ENCODE measurements at regions of chr9 and their contacts with region 1.

Region 1: GRCh38 chr9:19976226-19976625 is 187.4 kb upstream of the SLC24A2 start:
- DNase-seq: peak; percentile 49
- ATAC-seq: peak; percentile 96
- H3K4me3 Mint-ChIP-seq: no peak overlapping the region
- H3K27ac Mint-ChIP-seq: peak overlapping the region; percentile 88
- H3K4me1 Mint-ChIP-seq: peaks cover 25% of the 10 kb centered on the region
- H3K27me3 Mint-ChIP-seq: peaks cover 2% of the 10 kb centered on the region

Region 2: DNA sequence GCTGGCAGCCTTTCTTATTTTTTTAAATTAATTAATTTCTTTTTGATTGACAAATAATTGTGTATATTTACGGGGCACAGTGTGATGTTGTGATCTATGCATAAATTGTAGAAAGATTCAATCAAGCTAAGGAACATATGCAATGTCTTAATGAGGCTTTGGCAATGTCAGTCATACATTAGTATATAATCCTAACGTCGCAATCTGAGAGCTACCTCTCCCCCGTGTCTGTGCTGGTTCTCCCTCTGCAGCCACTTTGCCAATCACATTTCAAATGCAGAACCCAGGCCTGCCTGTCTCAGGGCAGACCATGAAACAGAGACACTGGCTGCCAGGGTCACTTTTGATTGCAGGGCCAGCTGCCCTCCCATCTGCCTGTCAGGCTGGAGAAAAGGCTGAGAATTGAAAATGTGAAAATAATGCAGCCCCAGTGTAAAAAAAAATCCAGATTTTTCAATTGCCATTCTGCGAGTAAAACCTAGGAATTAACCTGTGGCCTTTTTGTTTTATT is 243.7 kb before region 1 on chr9:
- CTCF ChIA-PET with region 1: no interaction called
- POLR2A ChIA-PET with region 1: no interaction called
- intact Hi-C with region 1: no loop called
- DNase-seq: no peak
- ATAC-seq: no peak
- H3K4me3 Mint-ChIP-seq: no peak overlapping the region
- H3K27ac Mint-ChIP-seq: no peak overlapping the region
- H3K4me1 Mint-ChIP-seq: no peaks in the 10 kb centered on the region
- H3K27me3 Mint-ChIP-seq: peaks cover 8% of the 10 kb centered on the region

Region 3: GRCh38 chr9:19828576-19829109 is 147.6 kb before region 1 on chr9:
- CTCF ChIA-PET with region 1: no interaction called
- POLR2A ChIA-PET with region 1: no interaction called
- intact Hi-C with region 1: no loop called
- DNase-seq: no peak
- ATAC-seq: no peak
- H3K4me3 Mint-ChIP-seq: no peak overlapping the region
- H3K27ac Mint-ChIP-seq: no peak overlapping the region
- H3K4me1 Mint-ChIP-seq: no peaks in the 10 kb centered on the region
- H3K27me3 Mint-ChIP-seq: peaks cover 6% of the 10 kb centered on the region

Region 4: GRCh38 chr9:20043035-20043434 is 66.8 kb after region 1 on chr9:
- CTCF ChIA-PET with region 1: no interaction called
- POLR2A ChIA-PET with region 1: no interaction called
- intact Hi-C with region 1: loop called (anchors 1 to 5 kb)
- DNase-seq: peak; percentile 35
- ATAC-seq: peak; percentile 85
- H3K4me3 Mint-ChIP-seq: peak overlapping the region; percentile 34
- H3K27ac Mint-ChIP-seq: peak overlapping the region; percentile 26
- H3K4me1 Mint-ChIP-seq: peaks cover 27% of the 10 kb centered on the region
- H3K27me3 Mint-ChIP-seq: no peaks in the 10 kb centered on the region

Region 5: DNA sequence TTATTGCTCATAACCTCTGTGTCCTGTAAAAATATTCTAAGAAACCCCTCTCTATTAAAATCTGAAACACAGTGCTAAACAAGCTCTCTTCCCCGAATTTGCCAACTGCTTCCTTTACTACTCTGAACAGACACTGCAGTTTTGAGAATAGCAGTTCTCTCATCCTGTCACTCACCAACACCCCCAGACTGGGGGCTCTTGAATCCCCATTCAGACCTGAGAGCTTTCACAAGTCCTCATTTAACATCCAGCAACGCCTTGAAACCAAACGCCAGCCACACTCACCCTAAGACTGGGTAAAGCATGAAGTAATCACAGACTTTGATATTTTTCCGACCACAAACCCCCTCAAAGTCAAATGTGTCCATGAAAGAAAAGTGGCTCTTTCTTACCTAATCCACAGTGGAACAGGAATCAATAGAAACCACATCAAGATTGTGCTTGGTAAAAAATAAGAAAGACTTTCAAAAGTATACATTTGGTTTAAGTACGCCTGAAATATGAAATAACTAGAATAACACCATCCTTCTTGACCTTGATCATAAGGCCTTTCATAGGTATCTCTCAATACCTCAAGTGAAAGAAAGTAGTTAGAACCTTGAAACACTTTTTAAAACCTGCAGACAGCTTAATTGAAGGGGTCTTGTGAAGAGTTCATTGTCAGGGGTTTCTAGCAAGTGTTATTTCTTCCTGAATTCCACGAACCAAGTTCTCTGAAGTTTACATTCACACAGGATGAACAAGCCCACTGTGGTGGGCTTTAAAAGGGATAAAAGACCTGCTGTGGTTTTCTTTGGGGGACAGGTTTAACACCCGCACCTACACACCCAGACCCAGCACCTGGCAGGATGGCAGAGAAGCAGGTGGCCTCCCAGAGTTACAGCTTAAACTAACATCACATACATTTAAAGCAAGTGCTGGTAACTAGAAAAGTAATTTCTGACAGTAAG is 233.4 kb after region 1 on chr9:
- CTCF ChIA-PET with region 1: no interaction called
- POLR2A ChIA-PET with region 1: no interaction called
- intact Hi-C with region 1: loop called in 1 of 2 experiments (anchors 2 kb)
- DNase-seq: peak; percentile 77
- ATAC-seq: peak; percentile 79
- H3K4me3 Mint-ChIP-seq: peak overlapping the region; percentile 31
- H3K27ac Mint-ChIP-seq: peak overlapping the region; percentile 84
- H3K4me1 Mint-ChIP-seq: peaks cover 25% of the 10 kb centered on the region
- H3K27me3 Mint-ChIP-seq: no peaks in the 10 kb centered on the region

Region 6: DNA sequence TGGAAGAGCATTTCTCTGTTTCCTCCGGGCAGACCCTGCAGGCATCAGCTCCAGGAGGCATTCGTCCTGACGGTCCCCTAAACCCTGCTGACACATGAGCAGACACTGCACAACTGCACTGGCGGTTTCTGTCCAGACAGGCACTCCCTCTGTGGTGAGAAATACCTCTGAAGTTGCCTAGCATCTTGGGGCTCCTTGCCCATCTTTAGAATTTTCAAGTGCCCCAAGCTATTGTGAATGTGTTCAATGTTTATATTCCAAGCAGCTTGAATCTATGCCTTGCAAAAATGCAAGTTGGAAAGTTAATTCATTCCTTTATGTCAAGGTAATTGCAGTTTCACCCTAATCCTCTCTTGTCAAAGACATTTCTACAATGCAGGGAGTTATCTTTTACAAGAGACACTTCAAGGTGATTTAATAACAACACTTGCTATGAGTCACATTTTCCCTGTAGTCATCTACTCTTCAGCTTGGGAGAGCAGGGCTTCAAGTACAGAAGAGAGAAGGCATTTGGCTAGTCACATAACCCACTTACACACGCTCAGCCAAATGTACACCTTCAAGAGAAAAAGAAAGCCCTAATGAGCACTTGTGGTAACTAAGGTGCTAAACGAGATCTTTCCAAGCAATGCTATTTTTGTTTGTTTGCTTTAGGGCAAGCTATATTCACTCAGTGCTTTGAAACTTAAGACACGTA is 343.6 kb after region 1 on chr9:
- CTCF ChIA-PET with region 1: no interaction called
- POLR2A ChIA-PET with region 1: no interaction called
- intact Hi-C with region 1: loop called in 1 of 2 experiments (anchors 5 kb)
- DNase-seq: peak; percentile 52
- ATAC-seq: peak; percentile 74
- H3K4me3 Mint-ChIP-seq: no peak overlapping the region
- H3K27ac Mint-ChIP-seq: peak overlapping the region; percentile 29
- H3K4me1 Mint-ChIP-seq: peaks cover 90% of the 10 kb centered on the region
- H3K27me3 Mint-ChIP-seq: no peaks in the 10 kb centered on the region

Region 7: GRCh38 chr9:20331095-20331685 is 355.0 kb after region 1 on chr9:
- CTCF ChIA-PET with region 1: no interaction called
- POLR2A ChIA-PET with region 1: no interaction called
- intact Hi-C with region 1: loop called in 1 of 2 experiments (anchors 1 kb)
- DNase-seq: no peak
- ATAC-seq: peak; percentile 93
- H3K4me3 Mint-ChIP-seq: no peak overlapping the region
- H3K27ac Mint-ChIP-seq: no peak overlapping the region
- H3K4me1 Mint-ChIP-seq: peaks cover 13% of the 10 kb centered on the region
- H3K27me3 Mint-ChIP-seq: no peaks in the 10 kb centered on the region

Region 8: GRCh38 chr9:20684035-20684872 is 708.0 kb after region 1 on chr9 and contains the start of gene FOCAD:
- CTCF ChIA-PET with region 1: no interaction called
- POLR2A ChIA-PET with region 1: no interaction called
- intact Hi-C with region 1: loop called in 1 of 2 experiments (anchors 5 kb)
- DNase-seq: peak; percentile 97
- ATAC-seq: peak; percentile 98
- H3K4me3 Mint-ChIP-seq: peak within 1 kb of the TSS; percentile 86
- H3K27ac Mint-ChIP-seq: peak within 1 kb of the TSS; percentile 75
- H3K4me1 Mint-ChIP-seq: peaks cover 27% of the 10 kb centered on the region
- H3K27me3 Mint-ChIP-seq: no peaks in the 10 kb centered on the region
- total RNA-seq, gene FOCAD: 32.5 to 34.3 TPM

Region 9: DNA sequence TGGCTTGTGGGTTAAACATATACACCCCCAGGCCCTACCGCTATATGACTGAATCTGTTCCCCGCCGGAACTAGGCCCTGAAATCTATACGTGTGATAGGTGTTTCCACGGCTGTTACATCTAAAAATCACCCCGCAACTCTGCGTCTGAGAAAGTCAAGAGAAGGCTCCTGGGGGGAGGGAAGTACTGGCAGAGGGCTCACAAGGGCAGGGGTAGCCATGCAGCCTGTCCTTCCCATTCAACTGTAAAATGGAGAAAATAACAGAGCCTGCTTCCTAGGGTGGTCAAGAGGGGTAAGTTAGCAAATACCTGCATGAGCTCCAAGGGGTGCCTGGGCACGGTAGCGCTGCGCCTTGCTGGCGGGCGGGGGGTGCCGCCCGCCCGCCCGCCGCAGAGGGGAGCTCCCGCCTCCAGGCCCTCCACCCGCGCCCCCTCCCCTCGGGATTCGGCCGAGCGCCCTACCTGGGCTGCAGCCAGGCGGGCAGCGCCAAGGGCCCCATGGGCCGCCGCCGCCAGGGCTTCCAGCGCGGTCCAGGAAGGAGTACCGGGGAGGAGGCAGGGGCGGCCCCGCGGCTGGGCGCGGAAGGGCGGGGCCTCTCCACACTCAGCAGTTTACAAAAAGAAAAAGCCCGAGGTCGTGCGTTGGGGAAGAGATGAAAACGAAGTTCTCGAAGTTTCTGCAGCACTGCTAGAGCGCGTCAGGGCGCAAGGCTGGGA is 1055.0 kb after region 1 on chr9 and contains the start of gene HACD4:
- CTCF ChIA-PET with region 1: no interaction called
- POLR2A ChIA-PET with region 1: no interaction called
- intact Hi-C with region 1: loop called in 1 of 2 experiments (anchors 1 kb)
- DNase-seq: peak; percentile 79
- ATAC-seq: peak; percentile 79
- H3K4me3 Mint-ChIP-seq: peak within 1 kb of the TSS; percentile 53
- H3K27ac Mint-ChIP-seq: peak within 1 kb of the TSS; percentile 71
- H3K4me1 Mint-ChIP-seq: peaks cover 26% of the 10 kb centered on the region
- H3K27me3 Mint-ChIP-seq: no peaks in the 10 kb centered on the region
- total RNA-seq, gene HACD4: 2.7 to 3.0 TPM